ENCODE measurements at regions of chr5 and their contacts with region 1.

Region 1: DNA sequence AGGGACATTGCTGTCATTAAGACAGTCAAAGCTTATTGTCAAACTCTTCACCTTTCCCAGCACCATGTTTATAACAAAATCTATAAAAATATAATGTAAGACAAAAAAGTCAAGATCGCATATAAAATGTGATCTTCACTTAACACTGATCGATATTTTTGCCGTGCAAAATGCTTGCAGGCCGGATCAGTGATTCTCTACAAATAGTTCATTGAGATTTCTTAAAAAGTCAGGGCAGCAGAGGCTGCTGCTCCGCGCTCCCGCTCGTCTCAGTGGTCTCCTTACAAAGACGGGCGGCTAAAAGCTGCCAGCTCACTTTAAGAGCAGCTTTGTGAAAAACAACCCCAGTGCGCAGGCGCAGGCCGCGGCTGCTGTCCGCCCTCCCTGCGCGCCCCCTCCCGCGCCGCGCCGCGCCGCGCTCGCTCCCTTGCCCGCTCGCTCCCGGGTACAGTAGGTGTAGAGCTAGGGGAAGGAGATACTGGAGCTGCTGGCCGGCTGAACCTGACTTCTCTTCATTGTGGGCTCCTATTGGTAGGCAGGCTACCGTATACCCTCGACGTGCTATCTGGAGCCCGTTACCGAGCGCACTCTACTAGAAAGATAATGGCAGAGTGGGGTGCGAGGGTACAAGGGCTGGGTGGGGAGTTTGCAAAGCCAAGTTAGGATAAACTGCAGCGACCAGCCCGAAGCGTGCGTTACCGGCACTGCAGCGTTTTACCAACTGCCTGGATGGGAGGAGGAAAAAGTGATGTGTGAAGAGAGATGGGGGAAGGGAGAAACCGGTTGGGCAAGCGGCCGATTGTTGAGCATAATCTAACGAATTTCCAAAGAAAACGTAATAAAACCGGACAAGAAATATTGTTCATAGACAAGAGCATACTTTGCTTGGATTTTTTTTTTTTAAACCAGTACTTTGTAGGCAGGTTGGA is at the start of gene ARRDC3:
- DNase-seq: peak; percentile 98
- H3K4me3 ChIP-seq: peak within 1 kb of the TSS; percentile 73 to 82 (median 82)
- H3K27ac ChIP-seq: peak within 1 kb of the TSS; percentile 96 to 100 (median 98)
- H3K4me1 ChIP-seq: peaks cover 0 to 26% (median 18%) of the 10 kb centered on the region in 4 donors
- H3K27me3 ChIP-seq: no peaks in the 10 kb centered on the region
- CTCF ChIP-seq: no peak
- EP300 ChIP-seq: peak in 1 of 4 donors; percentile 47
- POLR2A ChIP-seq: peak; percentile 91 to 92
- total RNA-seq, gene ARRDC3: 35.2 to 66.7 (median 48.7) TPM

Region 2: GRCh38 chr5:90866333-90866732 is 517.0 kb before region 1 on chr5:
- intact Hi-C with region 1: loop called (anchors 2 kb)
- DNase-seq: no peak
- H3K4me3 ChIP-seq: no peak overlapping the region
- H3K27ac ChIP-seq: no peak overlapping the region
- H3K4me1 ChIP-seq: peaks cover 0 to 4% (median 0%) of the 10 kb centered on the region in 4 donors
- H3K27me3 ChIP-seq: no peaks in the 10 kb centered on the region
- CTCF ChIP-seq: peak; percentile 17 to 51 (median 32)
- EP300 ChIP-seq: no peak
- POLR2A ChIP-seq: no peak

Region 3: DNA sequence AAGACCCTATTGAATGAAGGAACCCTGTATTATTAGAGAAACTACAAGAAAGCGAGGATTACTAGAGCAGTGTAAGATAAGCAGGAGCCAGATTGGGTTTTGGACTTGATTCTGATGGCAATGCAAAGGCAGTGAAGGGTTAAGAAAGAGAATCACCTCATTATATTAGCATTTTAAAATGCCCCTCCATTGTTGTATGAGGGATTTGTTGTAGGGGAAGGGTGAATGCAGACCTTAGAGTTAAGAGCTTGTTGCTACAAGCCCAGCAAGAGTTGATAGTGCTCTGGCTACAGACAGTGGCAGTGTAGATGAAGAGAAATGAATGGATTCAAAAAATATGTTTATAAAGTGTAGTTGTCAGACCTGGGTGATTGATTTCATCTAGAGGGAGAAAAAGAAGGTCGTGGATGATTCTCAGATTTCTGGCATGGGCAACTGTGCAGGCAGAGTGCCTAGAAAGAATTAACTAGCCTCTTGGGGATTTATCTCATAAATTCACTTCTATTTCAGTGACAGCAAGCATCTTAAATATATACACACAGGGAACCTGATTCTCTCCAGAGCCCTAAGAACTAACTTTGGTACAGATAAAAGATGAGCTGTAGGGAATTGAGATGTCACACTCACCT is 345.0 kb before region 1 on chr5:
- intact Hi-C with region 1: loop called (anchors 5 kb)
- DNase-seq: peak; percentile 83
- H3K4me3 ChIP-seq: no peak overlapping the region
- H3K27ac ChIP-seq: peak overlapping the region in 3 of 4 donors; percentile 45 to 56 (median 55)
- H3K4me1 ChIP-seq: peaks cover 0 to 41% (median 36%) of the 10 kb centered on the region in 4 donors
- H3K27me3 ChIP-seq: no peaks in the 10 kb centered on the region
- CTCF ChIP-seq: no peak
- EP300 ChIP-seq: peak; percentile 29 to 83 (median 60)
- POLR2A ChIP-seq: no peak

Region 4: GRCh38 chr5:91189480-91190300 is 193.6 kb before region 1 on chr5:
- intact Hi-C with region 1: loop called (anchors 5 kb)
- DNase-seq: peak; percentile 80
- H3K4me3 ChIP-seq: peak overlapping the region in 1 of 4 donors; percentile 11
- H3K27ac ChIP-seq: peak overlapping the region; percentile 52 to 71 (median 67)
- H3K4me1 ChIP-seq: peaks cover 0 to 19% (median 13%) of the 10 kb centered on the region in 4 donors
- H3K27me3 ChIP-seq: no peaks in the 10 kb centered on the region
- CTCF ChIP-seq: no peak
- EP300 ChIP-seq: no peak
- POLR2A ChIP-seq: no peak

Region 5: GRCh38 chr5:91311697-91312501 is 71.4 kb before region 1 on chr5:
- intact Hi-C with region 1: loop called (anchors 1 kb)
- DNase-seq: peak; percentile 88
- H3K4me3 ChIP-seq: no peak overlapping the region
- H3K27ac ChIP-seq: peak overlapping the region; percentile 75 to 84 (median 80)
- H3K4me1 ChIP-seq: peaks cover 0 to 48% (median 41%) of the 10 kb centered on the region in 4 donors
- H3K27me3 ChIP-seq: no peaks in the 10 kb centered on the region
- CTCF ChIP-seq: no peak
- EP300 ChIP-seq: peak in 3 of 4 donors; percentile 21 to 64 (median 51)
- POLR2A ChIP-seq: no peak